Posterior vena cava (tissue), 2 donors: ENCODE measurements at regions of chr10 and their contacts with region 1.

Region 1: GRCh38 chr10:23968301-23968700 is 240.6 kb upstream of the KIAA1217 start:
- DNase-seq: no peak

Region 2: GRCh38 chr10:23293145-23293724 is 675.1 kb before region 1 on chr10:
- intact Hi-C with region 1: loop called in 1 of 2 experiments (anchors 5 kb)
- DNase-seq: no peak

Region 3: DNA sequence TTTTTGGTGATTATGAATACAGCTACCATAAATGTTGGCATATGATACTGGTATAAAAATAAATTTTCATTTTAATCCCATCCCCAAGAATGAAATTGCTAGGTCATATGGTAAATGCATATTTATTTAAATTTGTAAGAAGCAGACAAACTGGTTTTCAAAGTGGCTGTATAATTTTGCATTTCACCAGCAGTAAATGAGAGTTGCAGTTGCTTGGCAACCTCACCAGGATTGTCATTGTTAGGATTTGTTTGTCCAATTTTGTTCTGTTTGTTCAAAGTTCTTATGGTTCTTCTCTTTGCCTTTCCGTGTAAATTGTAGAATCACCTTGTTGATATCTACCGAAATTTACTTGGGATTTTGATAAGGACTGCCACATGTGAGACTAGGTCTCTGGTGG is 292.0 kb before region 1 on chr10:
- intact Hi-C with region 1: no loop called
- DNase-seq: no peak